Naive thymus-derived CD4-positive, alpha-beta T cell (primary cell): ENCODE measurements at regions of chr3 and their contacts with region 1.

Region 1: DNA sequence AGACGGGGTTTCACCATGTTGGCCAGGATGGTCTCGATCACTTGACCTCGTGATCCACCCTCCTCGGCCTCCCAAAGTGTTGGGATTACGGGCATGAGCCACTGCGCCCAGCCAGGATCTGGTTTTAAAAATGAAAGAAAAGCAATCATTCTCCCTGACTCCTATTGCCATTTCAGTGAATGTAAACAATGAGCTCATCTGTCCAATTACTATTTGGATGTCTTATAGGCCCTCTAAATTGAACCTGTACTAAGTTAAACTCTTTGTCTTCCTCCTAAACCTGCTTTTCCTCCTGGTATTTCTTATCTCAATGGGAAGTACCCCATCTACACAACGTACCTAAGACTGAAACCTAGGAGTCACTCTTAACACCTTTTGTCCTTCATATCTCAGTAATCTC is 23.7 kb downstream of the PCYT1A start:
- DNase-seq: no peak
- ATAC-seq: no peak
- H3K4me3 ChIP-seq: no peak overlapping the region
- H3K4me3 Mint-ChIP-seq: no peak overlapping the region
- H3K27ac ChIP-seq: no peak overlapping the region
- H3K27ac Mint-ChIP-seq: peak overlapping the region in 1 of 9 donors; percentile 12
- H3K4me1 ChIP-seq: no peaks in the 10 kb centered on the region
- H3K4me1 Mint-ChIP-seq: peaks cover 0 to 13% (median 6%) of the 10 kb centered on the region in 7 donors
- H3K27me3 ChIP-seq: no peaks in the 10 kb centered on the region
- H3K27me3 Mint-ChIP-seq: no peaks in the 10 kb centered on the region

Region 2: DNA sequence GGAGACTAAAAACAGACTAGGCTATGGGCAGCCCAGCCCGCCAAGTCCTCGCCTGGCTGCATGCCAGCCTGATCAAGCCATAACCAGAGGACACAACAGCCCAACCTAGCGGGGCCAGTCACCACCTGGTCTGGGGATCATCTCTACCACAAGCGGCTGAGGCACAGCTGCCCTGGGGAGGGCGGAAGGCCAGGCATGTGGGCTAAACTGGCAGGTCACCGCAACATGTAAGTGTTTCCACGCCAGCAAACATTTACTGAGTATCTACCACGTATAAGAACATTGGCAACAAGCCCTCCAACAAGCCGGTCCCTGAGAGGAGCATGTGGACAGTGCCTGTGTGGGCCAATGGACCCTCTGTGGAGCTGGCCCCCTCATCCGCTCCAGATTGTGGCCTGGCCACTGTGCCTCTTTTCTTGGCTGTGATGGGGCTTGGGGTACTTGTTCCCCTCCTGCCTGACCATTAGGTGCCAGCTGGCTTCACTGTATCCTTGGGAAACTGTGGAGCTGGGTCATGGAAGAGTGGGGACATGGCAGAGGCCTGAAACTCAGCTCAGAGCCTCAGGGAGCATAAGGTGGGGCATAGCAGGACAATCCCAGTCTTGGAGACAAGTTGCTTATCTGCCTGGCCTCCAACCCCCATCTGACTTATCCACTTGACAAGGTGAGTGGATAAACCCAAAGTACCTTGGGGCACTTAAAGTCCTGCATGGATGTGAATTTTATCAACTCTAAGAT is 159.4 kb after region 1 on chr3:
- CTCF ChIA-PET with region 1: interaction called, 10 read pairs
- POLR2A ChIA-PET with region 1: no interaction called
- intact Hi-C with region 1: no loop called
- DNase-seq: no peak
- ATAC-seq: peak; percentile 20
- H3K4me3 ChIP-seq: no peak overlapping the region
- H3K4me3 Mint-ChIP-seq: peak overlapping the region in 1 of 10 donors; percentile 1
- H3K27ac ChIP-seq: no peak overlapping the region
- H3K27ac Mint-ChIP-seq: peak overlapping the region in 1 of 9 donors; percentile 67
- H3K4me1 ChIP-seq: no peaks in the 10 kb centered on the region
- H3K4me1 Mint-ChIP-seq: peaks cover 9 to 82% (median 66%) of the 10 kb centered on the region in 7 donors
- H3K27me3 ChIP-seq: no peaks in the 10 kb centered on the region
- H3K27me3 Mint-ChIP-seq: no peaks in the 10 kb centered on the region

Region 3: DNA sequence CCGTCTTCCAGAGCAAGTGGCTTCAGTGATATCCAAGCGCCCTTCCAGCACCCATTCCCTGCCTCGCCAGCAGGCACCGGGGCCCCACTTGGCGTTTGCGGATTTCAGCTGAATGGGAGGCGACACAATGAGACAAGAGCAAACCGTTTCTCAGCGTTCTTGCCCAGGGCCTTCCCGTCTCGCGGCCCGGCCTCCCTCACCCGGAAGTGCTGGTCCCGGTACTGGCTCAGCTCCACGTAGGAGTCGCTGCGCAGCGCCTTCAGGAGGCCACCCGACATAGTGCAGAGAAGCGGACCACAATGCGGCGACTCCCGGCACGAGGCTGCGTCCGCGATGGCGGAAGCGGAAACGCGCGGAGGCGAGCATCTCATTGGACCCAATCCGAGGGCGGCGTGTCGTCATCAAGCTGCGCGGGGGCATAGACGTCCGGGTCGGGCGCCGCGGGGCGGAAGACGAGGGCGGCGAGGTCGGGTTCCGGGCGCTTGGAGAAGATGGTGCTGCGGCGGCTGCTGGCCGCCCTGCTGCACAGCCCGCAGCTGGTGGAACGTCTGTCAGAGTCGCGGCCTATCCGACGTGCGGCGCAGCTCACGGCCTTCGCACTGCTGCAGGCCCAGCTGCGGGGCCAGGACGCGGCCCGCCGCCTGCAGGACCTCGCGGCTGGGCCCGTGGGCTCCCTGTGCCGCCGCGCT is 678.6 kb after region 1 on chr3 and contains the start of gene NCBP2:
- CTCF ChIA-PET with region 1: no interaction called
- POLR2A ChIA-PET with region 1: no interaction called
- intact Hi-C with region 1: no loop called
- DNase-seq: peak; percentile 98 to 100 (median 99)
- ATAC-seq: peak; percentile 97
- H3K4me3 ChIP-seq: peak within 1 kb of the TSS; percentile 100
- H3K4me3 Mint-ChIP-seq: peak within 1 kb of the TSS; percentile 94 to 99 (median 98)
- H3K27ac ChIP-seq: peak within 1 kb of the TSS; percentile 94
- H3K27ac Mint-ChIP-seq: peak within 1 kb of the TSS; percentile 96 to 100 (median 98)
- H3K4me1 ChIP-seq: peaks cover 16 to 20% of the 10 kb centered on the region in 2 donors
- H3K4me1 Mint-ChIP-seq: peaks cover 30 to 64% (median 49%) of the 10 kb centered on the region in 7 donors
- H3K27me3 ChIP-seq: no peaks in the 10 kb centered on the region
- H3K27me3 Mint-ChIP-seq: peaks cover 0 to 5% (median 0%) of the 10 kb centered on the region in 5 donors
- total RNA-seq, gene NCBP2: 42.9 to 77.3 (median 67.5) TPM